ENCODE measurements at regions of chr16 and their contacts with region 1.

Region 1: GRCh38 chr16:28879841-28880588 is 1.7 kb downstream of the ATP2A1 start:
- DNase-seq: peak; percentile 78
- ATAC-seq: peak; percentile 99
- H3K4me3 ChIP-seq: peak overlapping the region; percentile 71
- H3K27ac ChIP-seq: peak overlapping the region; percentile 28; the same call in 1 of the 2 replicates
- H3K4me1 ChIP-seq: peaks cover 7% of the 10 kb centered on the region; the same call in 1 of the 2 replicates
- H3K27me3 ChIP-seq: no peaks in the 10 kb centered on the region
- CTCF ChIP-seq: no peak
- POLR2A ChIP-seq: no peak
- RAD21 ChIP-seq: no peak

Region 2: DNA sequence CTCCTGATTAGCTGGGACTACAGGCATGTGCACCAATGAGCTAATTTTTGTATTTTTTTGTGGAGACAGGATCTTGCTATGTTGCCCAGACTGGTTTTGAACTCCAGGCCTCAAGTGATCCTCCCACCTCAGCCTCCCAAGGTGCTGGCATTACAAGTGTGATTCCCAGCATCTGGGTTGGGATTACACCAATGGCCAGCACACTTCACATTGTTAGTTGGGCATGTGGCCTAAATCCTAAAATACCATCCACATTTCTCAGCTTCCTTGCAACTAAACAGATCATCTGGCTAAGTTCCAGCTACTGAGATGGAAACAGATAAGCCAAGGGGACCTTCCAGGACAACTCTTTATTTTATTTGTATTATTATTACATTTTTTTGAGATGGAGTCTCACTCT is 35.2 kb after region 1 on chr16:
- CTCF ChIA-PET with region 1: no interaction called
- POLR2A ChIA-PET with region 1: no interaction called
- dilution Hi-C with region 1: no loop called
- in situ Hi-C with region 1: loop called (anchors 5 kb)
- intact Hi-C with region 1: loop called (anchors 5 kb)
- DNase-seq: peak; percentile 76
- ATAC-seq: peak; percentile 42
- H3K4me3 ChIP-seq: no peak overlapping the region
- H3K27ac ChIP-seq: no peak overlapping the region
- H3K4me1 ChIP-seq: no peaks in the 10 kb centered on the region
- H3K27me3 ChIP-seq: no peaks in the 10 kb centered on the region
- CTCF ChIP-seq: no peak
- POLR2A ChIP-seq: no peak
- RAD21 ChIP-seq: no peak

Region 3: DNA sequence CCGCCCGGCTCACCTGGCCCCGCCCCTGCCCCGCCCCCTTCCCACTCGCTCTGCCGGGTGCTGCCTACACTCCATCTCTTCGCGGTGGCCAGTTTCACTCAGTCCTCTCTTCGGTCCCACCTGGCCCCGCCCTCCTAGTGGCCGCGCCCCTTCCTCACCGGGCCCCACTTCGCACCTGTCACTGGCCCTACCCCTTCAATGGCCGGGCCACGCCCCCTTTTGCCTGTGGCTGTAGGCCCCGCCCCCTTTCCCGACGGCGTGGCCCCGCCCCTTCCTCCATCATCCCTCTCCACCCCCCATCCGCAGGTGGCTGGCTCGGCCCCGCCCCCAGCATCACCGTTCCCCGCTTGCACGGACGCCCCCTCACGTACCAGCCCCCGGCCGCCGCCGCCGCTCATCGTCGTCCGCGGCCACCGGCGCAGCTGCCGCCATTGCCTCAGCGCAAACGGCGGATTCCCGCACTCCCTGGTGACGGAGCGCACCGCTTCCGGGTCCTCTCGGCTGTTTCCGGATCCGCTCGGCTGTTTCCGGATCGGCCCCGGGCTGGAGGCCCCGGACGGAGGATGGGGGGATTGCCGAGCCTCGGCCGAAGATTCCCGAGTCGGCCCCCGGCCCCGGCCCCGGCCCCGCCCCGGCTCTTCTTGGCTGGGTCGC is 44.8 kb after region 1 on chr16 and contains the start of gene RABEP2:
- CTCF ChIA-PET with region 1: no interaction called
- POLR2A ChIA-PET with region 1: no interaction called
- dilution Hi-C with region 1: no loop called
- in situ Hi-C with region 1: loop called (anchors 5 kb)
- intact Hi-C with region 1: no loop called
- DNase-seq: peak; percentile 78
- ATAC-seq: peak; percentile 97
- H3K4me3 ChIP-seq: peak within 1 kb of the TSS; percentile 98
- H3K27ac ChIP-seq: peak within 1 kb of the TSS; percentile 96
- H3K4me1 ChIP-seq: peaks cover 2% of the 10 kb centered on the region; the same call in 1 of the 2 replicates
- H3K27me3 ChIP-seq: no peaks in the 10 kb centered on the region
- CTCF ChIP-seq: no peak
- POLR2A ChIP-seq: no peak
- RAD21 ChIP-seq: no peak
- total RNA-seq, gene RABEP2: 12.2 and 14.4 TPM in 2 replicates

Region 4: DNA sequence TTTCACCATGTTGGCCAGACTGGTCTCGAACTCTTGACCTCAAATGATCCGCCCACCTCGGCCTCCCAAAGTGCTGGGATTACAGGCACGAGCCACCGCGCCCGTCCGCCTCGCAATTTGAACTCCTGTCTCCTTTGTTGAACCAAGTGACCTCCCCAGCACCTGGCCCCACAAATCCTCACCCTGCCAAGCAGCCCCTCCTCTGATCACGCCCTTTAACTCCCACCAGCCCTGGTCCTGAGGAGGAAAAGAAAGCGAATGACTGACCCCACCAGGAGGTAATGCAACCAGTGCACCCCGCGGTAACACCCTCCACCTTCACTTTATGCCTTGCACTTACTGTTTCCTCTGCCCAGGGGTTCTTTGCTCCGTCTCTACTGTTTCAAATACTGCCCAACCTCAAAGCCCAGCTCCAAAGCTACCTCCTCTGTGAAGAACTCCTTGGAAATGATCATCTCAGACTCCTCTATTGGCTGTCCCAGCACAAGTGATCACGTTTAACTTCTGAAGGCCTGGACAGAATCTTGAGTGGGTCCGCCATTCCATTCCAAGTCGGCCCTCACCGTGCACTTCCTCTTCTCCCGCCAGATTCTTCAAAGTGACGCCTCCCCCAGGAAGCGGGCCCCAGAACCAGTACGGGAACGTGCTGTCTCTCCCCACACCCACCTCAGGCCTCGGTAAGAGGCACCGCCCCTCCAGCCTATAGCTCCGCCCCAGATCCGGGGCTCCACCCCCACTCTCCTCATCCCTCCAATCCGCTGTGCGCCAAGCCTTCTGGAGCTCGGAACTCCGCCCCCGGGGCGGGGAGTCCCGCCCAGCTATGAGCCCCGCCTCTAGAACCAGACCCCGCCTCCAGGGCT is 56.1 kb after region 1 on chr16:
- CTCF ChIA-PET with region 1: no interaction called
- POLR2A ChIA-PET with region 1: no interaction called
- dilution Hi-C with region 1: no loop called
- in situ Hi-C with region 1: no loop called
- intact Hi-C with region 1: no loop called
- DNase-seq: peak; percentile 42
- ATAC-seq: peak; percentile 97
- H3K4me3 ChIP-seq: no peak overlapping the region
- H3K27ac ChIP-seq: no peak overlapping the region
- H3K4me1 ChIP-seq: no peaks in the 10 kb centered on the region
- H3K27me3 ChIP-seq: peaks cover 7% of the 10 kb centered on the region; the same call in 1 of the 2 replicates
- CTCF ChIP-seq: no peak
- POLR2A ChIP-seq: no peak
- RAD21 ChIP-seq: no peak

Measured in IMR-90 (cell line).